OCI-LY7 (cell line): ENCODE measurements at regions of chr5 and their contacts with region 1.

Region 1: GRCh38 chr5:87383216-87383615 is 29.5 kb downstream of the CCNH start:
- DNase-seq: no peak
- H3K4me3 ChIP-seq: no peak overlapping the region
- H3K27ac ChIP-seq: no peak overlapping the region
- H3K4me1 ChIP-seq: no peaks in the 10 kb centered on the region
- CTCF ChIP-seq: no peak

Region 2: GRCh38 chr5:86565197-86565789 is 817.9 kb before region 1 on chr5:
- CTCF ChIA-PET with region 1: no interaction called
- POLR2A ChIA-PET with region 1: no interaction called
- intact Hi-C with region 1: no loop called
- DNase-seq: no peak
- H3K4me3 ChIP-seq: no peak overlapping the region
- H3K27ac ChIP-seq: no peak overlapping the region
- H3K4me1 ChIP-seq: no peaks in the 10 kb centered on the region
- CTCF ChIP-seq: no peak

Region 3: DNA sequence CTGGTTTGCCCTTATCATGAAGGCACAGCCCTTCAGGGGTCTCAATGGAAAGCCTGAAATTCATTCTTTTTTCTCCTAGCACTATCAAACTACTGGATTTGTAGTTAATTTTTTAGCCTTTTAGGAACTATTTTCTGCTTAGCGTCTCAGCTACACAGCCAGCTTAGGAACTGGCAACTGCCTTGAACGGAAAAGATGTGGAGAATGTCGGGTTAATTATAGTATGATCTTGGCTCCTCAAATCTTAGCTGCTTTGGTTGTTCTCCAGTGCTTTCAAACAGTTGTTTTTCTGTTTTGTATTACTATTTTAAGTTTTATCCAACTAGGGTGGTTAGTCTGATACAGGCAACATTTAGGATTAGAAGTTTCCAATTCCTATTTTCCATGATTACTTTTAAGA is 14.6 kb before region 1 on chr5:
- CTCF ChIA-PET with region 1: no interaction called
- POLR2A ChIA-PET with region 1: interaction called, 10 read pairs
- intact Hi-C with region 1: no loop called
- DNase-seq: no peak
- H3K4me3 ChIP-seq: no peak overlapping the region
- H3K27ac ChIP-seq: no peak overlapping the region
- H3K4me1 ChIP-seq: no peaks in the 10 kb centered on the region
- CTCF ChIP-seq: no peak